Common myeloid progenitor, CD34-positive (primary cell): ENCODE measurements at regions of chr17 and their contacts with region 1.

Region 1: DNA sequence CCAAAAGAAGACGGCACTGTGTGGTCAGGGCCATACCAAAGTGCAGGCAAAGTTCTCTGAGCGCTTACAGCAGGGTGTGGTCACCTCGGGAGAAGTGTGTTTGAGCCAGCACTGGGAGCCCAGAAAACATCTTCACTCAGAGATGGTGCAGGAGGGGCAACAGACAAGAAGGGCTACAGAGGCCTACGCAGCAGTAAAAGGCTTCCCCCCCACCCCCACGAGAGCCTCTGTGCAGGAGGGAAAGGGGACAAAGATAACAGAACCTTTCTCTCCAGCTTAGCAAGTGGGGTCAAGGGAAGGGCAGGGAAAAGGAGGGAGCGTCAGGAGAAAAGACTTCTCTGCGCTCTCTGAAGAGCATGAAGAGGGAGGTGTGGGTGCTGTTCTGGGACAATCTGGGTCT is 2.8 kb downstream of the VAT1 start:
- DNase-seq: no peak
- H3K4me3 ChIP-seq: no peak overlapping the region
- H3K27ac ChIP-seq: no peak overlapping the region
- H3K4me1 ChIP-seq: peaks cover 5 to 51% (median 48%) of the 10 kb centered on the region in 4 experiments
- H3K27me3 ChIP-seq: no peaks in the 10 kb centered on the region

Region 2: GRCh38 chr17:43140396-43141332 is 121.2 kb after region 1 on chr17:
- CTCF ChIA-PET with region 1: no interaction called
- POLR2A ChIA-PET with region 1: interaction called, 11 read pairs
- DNase-seq: peak in 2 of 3 donors; percentile 21 to 23
- H3K4me3 ChIP-seq: no peak overlapping the region
- H3K27ac ChIP-seq: no peak overlapping the region
- H3K4me1 ChIP-seq: peaks cover 0 to 12% (median 7%) of the 10 kb centered on the region in 4 experiments
- H3K27me3 ChIP-seq: no peaks in the 10 kb centered on the region